ENCODE measurements at regions of chr3 and their contacts with region 1.

Region 1: GRCh38 chr3:46193436-46193835 is 14.7 kb downstream of the CCR1 start:
- DNase-seq: peak; percentile 83 to 94 (median 93)
- H3K4me3 ChIP-seq: peak overlapping the region in 1 of 3 experiments; percentile 34
- H3K4me3 Mint-ChIP-seq: peak overlapping the region in 1 of 2 donors; percentile 72
- H3K27ac ChIP-seq: peak overlapping the region; percentile 67 to 81
- H3K27ac Mint-ChIP-seq: peak overlapping the region; percentile 90 to 98 (median 98)
- H3K4me1 ChIP-seq: peaks cover 49 to 65% of the 10 kb centered on the region in 2 donors
- H3K4me1 Mint-ChIP-seq: peaks cover 44% of the 10 kb centered on the region
- H3K27me3 ChIP-seq: no peaks in the 10 kb centered on the region
- H3K27me3 Mint-ChIP-seq: no peaks in the 10 kb centered on the region
- CTCF ChIP-seq: no peak

Region 2: GRCh38 chr3:46110701-46111493 is 82.5 kb before region 1 on chr3:
- intact Hi-C with region 1: loop called in 1 of 2 experiments (anchors 5 kb)
- DNase-seq: peak; percentile 97 to 100 (median 99)
- H3K4me3 ChIP-seq: no peak overlapping the region
- H3K4me3 Mint-ChIP-seq: peak overlapping the region; percentile 61 to 87
- H3K27ac ChIP-seq: peak overlapping the region; percentile 91 to 99
- H3K27ac Mint-ChIP-seq: peak overlapping the region; percentile 98 to 100 (median 100)
- H3K4me1 ChIP-seq: peaks cover 69 to 86% of the 10 kb centered on the region in 2 donors
- H3K4me1 Mint-ChIP-seq: peaks cover 73% of the 10 kb centered on the region
- H3K27me3 ChIP-seq: no peaks in the 10 kb centered on the region
- H3K27me3 Mint-ChIP-seq: no peaks in the 10 kb centered on the region
- CTCF ChIP-seq: no peak

Region 3: GRCh38 chr3:46242120-46242519 is 48.7 kb after region 1 on chr3 and contains the start of gene CCR3:
- intact Hi-C with region 1: no loop called
- DNase-seq: peak; percentile 53 to 82 (median 69)
- H3K4me3 ChIP-seq: peak within 1 kb of the TSS in 1 of 3 experiments; percentile 40
- H3K4me3 Mint-ChIP-seq: no peak within 1 kb of the TSS
- H3K27ac ChIP-seq: peak within 1 kb of the TSS in 1 of 2 donors; percentile 64
- H3K27ac Mint-ChIP-seq: peak within 1 kb of the TSS; percentile 19 to 92 (median 78)
- H3K4me1 ChIP-seq: peaks cover 21 to 26% of the 10 kb centered on the region in 2 donors
- H3K4me1 Mint-ChIP-seq: peaks cover 29% of the 10 kb centered on the region
- H3K27me3 ChIP-seq: no peaks in the 10 kb centered on the region
- H3K27me3 Mint-ChIP-seq: peaks cover 0 to 2% (median 1%) of the 10 kb centered on the region in 3 donors
- CTCF ChIP-seq: no peak
- polyA plus RNA-seq, gene CCR3: 0.38 to 0.74 (median 0.44) TPM